ENCODE measurements at regions of chr13 and their contacts with region 1.

Region 1: DNA sequence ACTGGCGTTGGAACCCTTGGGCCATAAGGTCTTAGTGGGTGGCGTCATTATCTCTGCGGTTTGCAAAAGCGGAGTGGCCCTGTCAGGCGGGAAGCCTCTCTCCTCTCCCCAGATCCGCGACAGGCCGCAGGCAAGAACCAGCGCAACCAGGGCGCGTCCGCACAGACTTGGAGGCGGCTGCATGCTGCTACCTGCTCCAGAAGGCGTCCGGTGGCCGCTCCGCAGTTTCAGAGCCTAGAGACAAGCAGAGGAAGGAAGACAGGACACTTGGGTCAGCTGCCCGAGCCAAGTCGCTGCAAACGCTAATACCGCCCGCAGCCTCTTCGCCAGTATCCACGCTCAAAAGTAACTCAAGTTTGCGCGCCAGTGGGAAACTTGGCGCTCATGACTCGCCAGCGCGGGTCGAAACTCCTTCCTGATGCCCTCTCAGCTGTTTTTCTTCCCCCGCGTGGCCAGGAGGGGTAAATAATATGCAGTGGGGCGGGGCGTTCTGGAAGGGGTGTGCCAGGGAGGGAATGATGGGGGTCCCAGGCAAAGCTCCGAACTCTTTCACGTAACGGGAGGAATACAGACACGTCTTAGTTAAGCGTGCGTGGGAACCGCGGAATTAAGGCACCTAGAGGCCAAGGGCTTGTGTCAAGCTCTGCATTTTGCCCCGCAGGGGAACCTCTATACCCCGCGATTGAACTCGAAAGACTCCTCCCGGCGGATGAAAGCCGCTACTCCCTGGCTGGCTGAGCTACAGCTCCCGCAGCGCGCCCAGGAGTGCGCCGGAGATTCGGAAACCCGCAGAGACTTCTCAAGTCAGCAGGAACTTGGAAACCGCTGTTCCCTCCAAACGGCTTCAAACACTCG is at the start of gene EDNRB:
- DNase-seq: peak in 9 of 10 donors; percentile 19 to 58 (median 31)
- H3K4me3 ChIP-seq: peak within 1 kb of the TSS; percentile 44 to 81 (median 64)
- H3K27ac ChIP-seq: peak within 1 kb of the TSS in 47 of 59 donors; percentile 1 to 79 (median 49)
- H3K27me3 ChIP-seq: peaks cover 0 to 5% (median 0%) of the 10 kb centered on the region in 45 donors
- CTCF ChIP-seq: peak in 1 of 56 donors; percentile 16
- total RNA-seq, gene EDNRB: 16.3 to 129 (median 38.0) TPM

Region 2: DNA sequence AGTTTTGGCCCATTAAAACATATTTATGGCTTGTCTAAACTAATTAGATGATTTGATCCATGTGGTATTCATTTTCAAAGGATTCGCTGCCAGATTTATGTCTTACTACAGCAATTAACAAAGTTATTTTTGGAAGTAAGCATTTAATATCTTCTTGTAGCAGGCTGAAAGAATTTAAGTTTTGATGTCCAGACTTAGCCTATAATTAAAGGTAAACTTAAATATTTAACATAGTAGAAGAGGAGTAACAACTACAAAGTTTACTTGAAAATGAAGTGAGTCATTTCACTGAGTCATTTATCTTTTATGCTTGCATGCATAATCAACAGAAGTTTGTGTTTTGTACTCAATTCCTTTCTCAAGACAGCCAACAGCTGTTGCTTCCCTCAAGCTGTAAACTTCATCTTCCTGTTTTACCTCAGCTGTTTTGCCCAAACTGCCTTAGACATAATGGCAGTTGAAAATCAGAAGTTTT is 58.1 kb before region 1 on chr13:
- intact Hi-C with region 1: loop called in 1 of 2 experiments (anchors 10 kb)
- DNase-seq: no peak
- H3K4me3 ChIP-seq: no peak overlapping the region
- H3K27ac ChIP-seq: no peak overlapping the region
- H3K27me3 ChIP-seq: no peaks in the 10 kb centered on the region
- CTCF ChIP-seq: no peak

Region 3: GRCh38 chr13:78102121-78102677 is 183.6 kb after region 1 on chr13:
- intact Hi-C with region 1: no loop called
- DNase-seq: no peak
- H3K4me3 ChIP-seq: no peak overlapping the region
- H3K27ac ChIP-seq: peak overlapping the region in 3 of 59 donors; percentile 9 to 35 (median 21)
- H3K27me3 ChIP-seq: peaks cover 0 to 3% (median 0%) of the 10 kb centered on the region in 45 donors
- CTCF ChIP-seq: no peak